SK-N-SH (cell line): ENCODE measurements at regions of chr1 and their contacts with region 1.

Region 1: GRCh38 chr1:155208541-155209311 is at the start of gene MTX1:
- DNase-seq: peak; percentile 93
- H3K4me3 ChIP-seq: peak within 1 kb of the TSS; percentile 65 to 98
- H3K27ac ChIP-seq: peak within 1 kb of the TSS; percentile 93 to 98
- H3K4me1 ChIP-seq: peaks cover 0 to 29% of the 10 kb centered on the region in 2 experiments; a peak in 3 of 4 replicates
- H3K27me3 ChIP-seq: no peaks in the 10 kb centered on the region
- CTCF ChIP-seq: no peak
- EP300 ChIP-seq: peak; percentile 2 to 36; a peak in 1 of 4 replicates
- RAD21 ChIP-seq: no peak
- polyA plus RNA-seq, gene MTX1: 79.1 TPM in 2 replicates

Region 2: DNA sequence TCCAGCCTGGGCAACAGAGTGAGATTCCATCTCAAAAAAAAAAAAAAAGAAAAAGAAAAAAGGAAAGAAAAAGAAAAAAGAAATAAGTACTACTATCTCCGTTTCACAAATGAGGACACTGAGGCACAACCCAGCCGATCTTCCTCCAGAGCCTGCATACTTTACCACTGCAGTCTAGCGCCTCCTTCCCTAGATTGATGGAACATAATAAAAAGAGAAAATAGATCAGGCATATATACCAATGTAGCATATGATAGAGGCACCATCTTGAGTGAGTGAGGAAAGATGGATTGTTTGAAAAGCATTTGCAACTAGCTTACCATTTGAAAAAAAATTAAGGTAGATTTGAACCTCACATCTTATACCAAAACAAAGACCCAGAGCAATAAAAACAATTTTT is 63.2 kb before region 1 on chr1:
- CTCF ChIA-PET with region 1: no interaction called
- POLR2A ChIA-PET with region 1: no interaction called
- DNase-seq: no peak
- H3K4me3 ChIP-seq: no peak overlapping the region
- H3K27ac ChIP-seq: no peak overlapping the region
- H3K4me1 ChIP-seq: no peaks in the 10 kb centered on the region; a peak in 1 of 4 replicates
- H3K27me3 ChIP-seq: peaks cover 6% of the 10 kb centered on the region; the same call in 1 of the 2 replicates
- CTCF ChIP-seq: no peak; the same call in 1 of the 2 replicates
- EP300 ChIP-seq: no peak
- RAD21 ChIP-seq: no peak

Region 3: DNA sequence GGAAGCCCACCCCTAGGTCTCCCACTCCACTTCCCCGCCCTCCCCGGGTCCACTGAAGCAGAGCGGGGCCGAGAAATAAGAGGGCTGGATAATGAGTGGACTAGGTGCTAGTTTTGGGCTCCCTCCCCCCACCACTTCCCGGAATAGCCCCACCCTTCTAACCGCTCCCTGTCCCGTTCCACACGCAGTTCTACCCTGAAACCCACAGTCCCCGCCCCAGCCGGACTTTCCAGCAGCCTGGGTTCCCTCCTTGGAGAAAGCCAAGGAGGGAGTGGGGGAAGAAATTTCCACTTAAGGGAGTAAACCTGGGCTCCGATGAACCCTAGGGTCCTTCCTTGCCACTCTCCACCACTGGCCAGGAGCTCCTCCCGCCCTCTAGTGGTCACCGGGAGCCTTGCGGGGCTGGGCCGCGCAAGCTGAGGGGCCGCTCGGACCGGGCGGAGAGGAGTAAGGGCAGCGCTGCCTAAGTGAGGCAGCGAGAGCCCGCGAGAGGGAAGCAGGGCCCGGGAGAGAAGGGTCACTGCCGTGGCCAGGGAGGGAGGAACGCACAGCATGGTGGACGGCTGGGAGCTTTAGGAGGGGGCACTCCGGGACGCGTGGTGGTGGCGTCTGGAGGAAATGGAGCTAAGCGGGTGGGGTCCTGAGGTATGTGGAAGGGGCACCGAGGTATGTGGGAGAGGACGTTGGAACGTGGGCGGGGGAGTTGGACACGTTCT is 15.3 kb before region 1 on chr1:
- CTCF ChIA-PET with region 1: interaction called, 80 read pairs
- POLR2A ChIA-PET with region 1: interaction called, 25 read pairs
- DNase-seq: peak; percentile 94
- H3K4me3 ChIP-seq: peak overlapping the region; percentile 30 to 60
- H3K27ac ChIP-seq: peak overlapping the region; percentile 78 to 86
- H3K4me1 ChIP-seq: peaks cover 0 to 24% of the 10 kb centered on the region in 2 experiments; a peak in 2 of 4 replicates
- H3K27me3 ChIP-seq: no peaks in the 10 kb centered on the region
- CTCF ChIP-seq: peak; percentile 97
- EP300 ChIP-seq: no peak
- RAD21 ChIP-seq: peak; percentile 64

Region 4: GRCh38 chr1:155218854-155219591 is 10.3 kb after region 1 on chr1:
- CTCF ChIA-PET with region 1: interaction called, 9 read pairs
- POLR2A ChIA-PET with region 1: interaction called, 11 read pairs
- DNase-seq: peak; percentile 77
- H3K4me3 ChIP-seq: peak overlapping the region in 1 of 2 experiments; percentile 33; a peak in 2 of 4 replicates
- H3K27ac ChIP-seq: peak overlapping the region in 1 of 2 experiments; percentile 71; a peak in 2 of 4 replicates
- H3K4me1 ChIP-seq: peaks cover 0 to 14% of the 10 kb centered on the region in 2 experiments; a peak in 2 of 4 replicates
- H3K27me3 ChIP-seq: no peaks in the 10 kb centered on the region
- CTCF ChIP-seq: no peak
- EP300 ChIP-seq: no peak
- RAD21 ChIP-seq: no peak; the same call in 1 of the 2 replicates

Region 5: GRCh38 chr1:155227261-155228095 is 18.8 kb after region 1 on chr1:
- CTCF ChIA-PET with region 1: interaction called, 48 read pairs
- POLR2A ChIA-PET with region 1: interaction called, 3 read pairs
- DNase-seq: peak; percentile 97
- H3K4me3 ChIP-seq: peak overlapping the region; percentile 60 to 69
- H3K27ac ChIP-seq: peak overlapping the region; percentile 86 to 93
- H3K4me1 ChIP-seq: peaks cover 12 to 14% of the 10 kb centered on the region in 2 experiments; a peak in 3 of 4 replicates
- H3K27me3 ChIP-seq: no peaks in the 10 kb centered on the region
- CTCF ChIP-seq: no peak
- EP300 ChIP-seq: no peak
- RAD21 ChIP-seq: no peak

Region 6: DNA sequence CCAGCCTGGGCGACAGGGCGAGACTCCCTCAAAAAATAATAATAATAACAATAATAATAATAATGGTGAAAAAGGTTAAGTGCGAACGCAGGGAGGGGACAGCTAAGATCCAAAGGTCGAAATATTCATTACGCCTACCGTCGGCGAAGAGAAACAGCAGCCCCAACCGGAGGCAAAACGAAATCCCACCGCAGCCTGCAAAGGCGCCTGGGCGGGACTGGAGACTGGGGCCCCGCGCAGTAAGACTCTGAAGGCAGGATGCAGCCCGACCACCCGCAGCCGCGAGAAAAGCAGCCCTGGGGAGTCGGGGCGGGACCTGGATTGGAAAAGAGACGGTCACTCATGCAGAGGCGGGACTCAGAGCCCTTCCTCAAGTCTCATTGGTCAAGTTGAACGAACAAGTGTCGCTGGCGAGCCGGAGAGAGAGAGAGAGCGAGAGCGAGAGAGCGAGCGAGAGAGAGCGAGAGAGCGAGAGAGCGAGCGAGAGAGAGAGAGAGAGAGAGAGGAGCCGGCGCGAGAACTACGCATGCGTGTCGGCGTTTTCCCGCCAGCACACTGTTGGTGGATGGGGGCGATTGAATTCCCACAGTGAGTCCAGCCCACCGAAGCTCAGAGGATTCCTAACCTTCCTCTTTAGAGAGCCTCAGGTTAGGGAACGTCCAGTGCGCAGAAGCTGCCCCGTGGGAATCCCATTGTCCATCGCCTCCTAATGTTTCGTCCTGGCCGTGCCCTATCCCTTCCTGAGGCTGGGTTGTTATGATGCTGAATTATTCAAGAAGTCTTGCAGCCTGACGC is 35.8 kb after region 1 on chr1:
- CTCF ChIA-PET with region 1: interaction called, 14 read pairs
- POLR2A ChIA-PET with region 1: interaction called, 3 read pairs
- DNase-seq: peak; percentile 91
- H3K4me3 ChIP-seq: peak overlapping the region; percentile 49 to 65
- H3K27ac ChIP-seq: peak overlapping the region; percentile 75 to 92
- H3K4me1 ChIP-seq: peaks cover 0 to 24% of the 10 kb centered on the region in 2 experiments; a peak in 3 of 4 replicates
- H3K27me3 ChIP-seq: no peaks in the 10 kb centered on the region
- CTCF ChIP-seq: peak; percentile 56
- EP300 ChIP-seq: peak; percentile 67 to 77; a peak in 3 of 4 replicates
- RAD21 ChIP-seq: peak; percentile 49